Mammary epithelial cell (primary cell): ENCODE measurements at regions of chr4 and their contacts with region 1.

Region 1: GRCh38 chr4:114509340-114509739 is 89.3 kb upstream of the UGT8 start:
- DNase-seq: no peak
- H3K4me3 ChIP-seq: no peak overlapping the region
- H3K27ac ChIP-seq: no peak overlapping the region
- H3K4me1 ChIP-seq: peaks cover 7% of the 10 kb centered on the region
- H3K27me3 ChIP-seq: peaks cover 2% of the 10 kb centered on the region
- CTCF ChIP-seq: no peak

Region 2: DNA sequence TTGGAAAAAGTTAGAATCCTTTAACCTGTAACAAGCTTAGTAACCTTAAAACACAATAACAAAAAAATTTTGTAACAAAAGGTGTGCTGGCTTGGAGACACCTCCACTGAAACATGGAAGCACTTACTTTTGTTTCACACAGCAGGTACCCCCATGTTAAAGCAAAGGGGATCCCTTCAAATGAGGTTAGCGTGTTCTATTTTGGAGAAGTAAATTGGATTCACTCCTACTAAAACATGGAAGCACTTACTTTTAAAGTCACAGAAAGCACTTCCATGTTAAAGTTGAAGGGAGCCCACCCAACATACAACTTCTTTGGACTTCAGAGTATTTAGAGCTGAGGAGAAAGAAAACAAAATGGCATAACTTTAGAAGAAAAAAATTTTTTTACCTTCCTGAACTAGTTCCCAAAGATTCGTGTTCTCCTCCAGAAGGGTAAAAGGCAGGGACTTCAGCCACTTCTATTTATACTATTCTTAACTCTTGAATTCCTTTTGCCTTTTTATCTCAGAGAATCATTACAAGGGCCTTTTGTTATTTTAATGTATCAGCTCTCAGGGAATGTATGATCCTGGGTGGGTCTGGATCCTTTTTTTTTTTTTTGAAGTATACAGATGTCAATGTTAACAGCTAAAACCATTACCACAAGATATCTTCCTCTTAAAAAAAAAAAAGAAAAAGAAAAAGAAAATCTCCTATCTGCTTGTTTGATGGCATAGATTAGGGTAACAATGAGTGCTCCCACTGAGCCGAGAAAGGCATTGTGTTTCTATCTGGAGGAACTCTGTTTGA is 1860.9 kb before region 1 on chr4:
- CTCF ChIA-PET with region 1: no interaction called
- dilution Hi-C with region 1: no loop called
- in situ Hi-C with region 1: no loop called
- intact Hi-C with region 1: no loop called
- DNase-seq: no peak
- H3K4me3 ChIP-seq: no peak overlapping the region
- H3K27ac ChIP-seq: no peak overlapping the region
- H3K4me1 ChIP-seq: no peaks in the 10 kb centered on the region
- H3K27me3 ChIP-seq: no peaks in the 10 kb centered on the region
- CTCF ChIP-seq: no peak

Region 3: DNA sequence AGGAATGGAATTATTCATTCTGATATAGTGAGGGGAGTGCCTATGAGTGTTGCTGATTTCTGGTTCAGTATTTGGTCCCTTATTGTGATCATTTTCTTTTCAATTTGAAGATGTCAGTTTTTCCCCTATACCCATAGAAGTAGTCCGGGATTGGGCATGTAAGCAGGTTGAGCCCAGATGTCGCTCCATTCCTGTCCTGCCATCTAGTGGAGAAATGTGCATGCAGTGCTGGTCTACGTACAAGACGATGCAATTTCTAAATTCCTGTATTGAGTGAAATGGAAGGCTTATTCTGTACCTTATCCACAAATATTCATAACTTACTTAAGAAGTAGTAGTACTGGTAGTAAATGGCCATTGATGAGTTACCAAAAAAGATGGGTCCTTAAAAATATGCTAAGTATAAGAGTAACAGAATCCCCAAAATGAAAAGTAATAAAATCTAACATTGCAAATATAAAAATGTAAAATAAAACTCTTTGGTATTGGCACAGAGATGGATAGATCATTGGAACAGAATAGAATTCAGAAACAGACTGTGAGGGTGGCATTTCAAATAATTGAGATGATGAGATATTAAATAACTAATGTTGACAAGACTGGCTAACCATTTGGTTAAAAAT is 150.2 kb after region 1 on chr4:
- CTCF ChIA-PET with region 1: no interaction called
- dilution Hi-C with region 1: no loop called
- in situ Hi-C with region 1: no loop called
- intact Hi-C with region 1: loop called (anchors 2 kb)
- DNase-seq: peak; percentile 54
- H3K4me3 ChIP-seq: no peak overlapping the region
- H3K27ac ChIP-seq: no peak overlapping the region
- H3K4me1 ChIP-seq: no peaks in the 10 kb centered on the region
- H3K27me3 ChIP-seq: no peaks in the 10 kb centered on the region
- CTCF ChIP-seq: peak; percentile 88 to 96

Region 4: GRCh38 chr4:114807759-114808404 is 298.5 kb after region 1 on chr4:
- CTCF ChIA-PET with region 1: no interaction called
- dilution Hi-C with region 1: no loop called
- in situ Hi-C with region 1: no loop called
- intact Hi-C with region 1: no loop called
- DNase-seq: peak; percentile 14
- H3K4me3 ChIP-seq: no peak overlapping the region
- H3K27ac ChIP-seq: no peak overlapping the region
- H3K4me1 ChIP-seq: no peaks in the 10 kb centered on the region
- H3K27me3 ChIP-seq: no peaks in the 10 kb centered on the region
- CTCF ChIP-seq: peak; percentile 84 to 93